ENCODE measurements at regions of chr17 and their contacts with region 1.

Region 1: DNA sequence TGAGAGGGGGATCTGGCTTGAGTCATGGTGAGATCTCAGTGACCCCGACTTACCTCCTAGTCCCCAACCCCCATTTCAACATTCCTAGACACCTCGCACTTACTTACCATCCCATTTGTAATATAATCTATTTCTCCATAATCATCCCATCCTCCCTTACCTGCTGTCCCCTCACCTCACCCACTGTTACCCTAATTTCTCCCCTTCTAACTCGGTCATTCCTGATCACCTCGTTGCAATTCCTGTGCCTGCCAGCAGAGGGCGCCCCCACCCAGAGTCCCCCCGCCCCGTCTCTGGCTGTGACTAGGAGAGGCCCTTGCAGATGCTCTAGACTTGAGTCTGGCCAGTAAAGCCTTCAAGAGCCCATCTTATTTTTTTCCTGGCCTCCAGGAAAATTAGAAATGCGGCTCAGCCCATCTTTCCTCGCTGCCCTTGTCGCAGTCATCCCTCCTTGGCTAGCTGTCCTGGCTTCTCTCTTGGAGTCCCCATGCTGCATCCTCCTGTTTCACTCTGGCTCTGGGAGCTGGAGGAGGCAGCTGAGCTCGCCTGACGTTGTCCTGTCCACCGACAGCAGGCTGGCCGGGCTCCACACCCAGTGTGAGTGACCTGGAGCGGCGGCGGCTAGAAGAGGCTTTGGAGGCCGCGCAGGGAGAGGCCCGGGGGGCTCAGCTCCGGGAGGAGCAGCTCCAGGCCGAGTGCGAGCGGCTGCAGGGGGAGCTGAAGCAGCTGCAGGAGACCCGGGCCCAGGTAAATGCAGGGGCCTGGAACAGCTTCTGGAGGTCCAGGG is 5.0 kb downstream of the TBKBP1 start:
- DNase-seq: peak; percentile 69 to 91 (median 81)
- ATAC-seq: peak; percentile 49
- H3K4me3 ChIP-seq: no peak overlapping the region
- H3K4me3 Mint-ChIP-seq: no peak overlapping the region
- H3K27ac ChIP-seq: peak overlapping the region in 1 of 2 experiments; percentile 4
- H3K27ac Mint-ChIP-seq: no peak overlapping the region
- H3K4me1 ChIP-seq: peaks cover 38% of the 10 kb centered on the region
- H3K4me1 Mint-ChIP-seq: peaks cover 43% of the 10 kb centered on the region
- H3K27me3 ChIP-seq: no peaks in the 10 kb centered on the region
- H3K27me3 Mint-ChIP-seq: no peaks in the 10 kb centered on the region
- CTCF ChIP-seq: peak; percentile 96

Region 2: GRCh38 chr17:47675380-47676198 is 23.4 kb before region 1 on chr17:
- CTCF ChIA-PET with region 1: interaction called, 13 read pairs
- POLR2A ChIA-PET with region 1: no interaction called
- intact Hi-C with region 1: no loop called
- DNase-seq: no peak
- ATAC-seq: no peak
- H3K4me3 ChIP-seq: no peak overlapping the region
- H3K4me3 Mint-ChIP-seq: no peak overlapping the region
- H3K27ac ChIP-seq: no peak overlapping the region
- H3K27ac Mint-ChIP-seq: no peak overlapping the region
- H3K4me1 ChIP-seq: no peaks in the 10 kb centered on the region
- H3K4me1 Mint-ChIP-seq: peaks cover 22% of the 10 kb centered on the region
- H3K27me3 ChIP-seq: no peaks in the 10 kb centered on the region
- H3K27me3 Mint-ChIP-seq: no peaks in the 10 kb centered on the region
- CTCF ChIP-seq: no peak

Region 3: DNA sequence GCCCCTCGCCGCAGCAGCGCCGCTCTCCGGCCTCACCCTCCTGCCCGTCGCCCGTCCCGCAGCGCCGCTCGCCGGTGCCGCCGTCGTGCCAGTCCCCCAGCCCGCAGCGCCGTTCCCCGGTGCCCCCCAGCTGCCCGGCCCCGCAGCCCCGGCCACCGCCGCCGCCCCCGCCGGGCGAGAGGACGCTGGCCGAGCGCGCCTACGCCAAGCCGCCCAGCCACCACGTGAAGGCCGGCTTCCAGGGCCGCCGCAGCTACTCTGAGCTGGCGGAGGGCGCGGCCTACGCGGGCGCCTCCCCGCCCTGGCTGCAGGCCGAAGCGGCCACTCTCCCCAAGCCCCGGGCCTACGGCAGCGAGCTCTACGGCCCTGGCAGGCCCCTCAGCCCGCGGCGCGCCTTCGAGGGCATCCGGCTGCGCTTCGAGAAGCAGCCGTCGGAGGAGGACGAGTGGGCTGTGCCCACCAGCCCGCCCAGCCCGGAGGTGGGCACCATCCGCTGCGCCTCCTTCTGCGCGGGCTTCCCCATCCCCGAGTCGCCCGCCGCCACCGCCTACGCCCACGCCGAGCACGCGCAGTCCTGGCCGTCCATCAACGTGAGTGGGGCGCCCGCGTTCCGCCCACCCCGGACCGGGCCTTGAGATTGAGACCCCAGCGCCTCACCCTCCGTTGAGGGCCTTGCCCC is 10.1 kb after region 1 on chr17:
- CTCF ChIA-PET with region 1: interaction called, 25 read pairs
- POLR2A ChIA-PET with region 1: no interaction called
- intact Hi-C with region 1: no loop called
- DNase-seq: no peak
- ATAC-seq: no peak
- H3K4me3 ChIP-seq: no peak overlapping the region
- H3K4me3 Mint-ChIP-seq: no peak overlapping the region
- H3K27ac ChIP-seq: no peak overlapping the region
- H3K27ac Mint-ChIP-seq: no peak overlapping the region
- H3K4me1 ChIP-seq: peaks cover 67% of the 10 kb centered on the region
- H3K4me1 Mint-ChIP-seq: peaks cover 56% of the 10 kb centered on the region
- H3K27me3 ChIP-seq: no peaks in the 10 kb centered on the region
- H3K27me3 Mint-ChIP-seq: no peaks in the 10 kb centered on the region
- CTCF ChIP-seq: no peak

Region 4: DNA sequence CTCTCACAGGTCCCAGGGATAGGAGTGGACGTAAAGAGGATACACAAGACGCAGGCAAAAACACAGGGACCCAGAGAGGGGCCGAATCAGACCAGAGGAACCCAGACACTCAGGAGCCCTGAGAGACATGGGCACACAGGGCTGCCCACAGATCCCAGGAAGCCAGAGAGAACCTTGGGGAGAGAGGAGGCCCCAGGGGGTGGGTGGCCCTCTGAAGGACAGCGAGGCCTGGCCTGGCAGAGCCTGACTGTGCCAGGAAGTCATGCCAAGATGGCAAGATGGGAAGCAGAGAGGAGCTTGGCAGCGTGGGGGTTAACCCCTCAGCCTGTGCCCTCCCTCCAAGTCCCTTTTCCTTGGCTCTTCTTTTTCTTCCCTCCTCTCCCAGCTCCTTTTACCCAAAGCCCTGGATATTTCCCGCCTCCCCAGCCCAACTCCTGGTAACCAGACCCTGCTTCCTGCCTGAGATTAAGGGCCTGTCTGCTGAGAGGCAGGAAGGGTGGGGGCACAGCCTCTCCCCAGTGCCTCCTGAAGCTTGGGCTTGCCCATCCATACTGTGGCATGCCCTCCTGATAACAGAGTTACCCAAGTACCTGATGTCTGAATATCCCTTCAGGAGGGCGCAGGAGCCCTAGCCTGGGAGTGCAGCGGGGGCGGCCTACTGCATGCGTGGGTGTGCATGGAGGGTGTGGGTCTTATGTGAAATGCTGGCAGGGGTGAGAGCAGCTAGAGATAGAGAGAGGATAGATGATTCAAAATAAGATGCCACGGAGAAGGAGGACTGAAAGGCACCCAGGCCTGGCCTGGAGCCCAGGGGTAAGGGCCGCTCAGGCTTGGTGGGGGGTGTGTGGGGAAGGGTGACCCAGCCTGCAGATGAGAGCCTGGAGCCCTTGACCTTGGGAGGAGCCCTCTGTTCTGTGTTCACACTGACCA is 28.1 kb after region 1 on chr17:
- CTCF ChIA-PET with region 1: interaction called, 37 read pairs
- POLR2A ChIA-PET with region 1: interaction called, 8 read pairs
- intact Hi-C with region 1: loop called (anchors 2 kb)
- DNase-seq: no peak
- ATAC-seq: no peak
- H3K4me3 ChIP-seq: no peak overlapping the region
- H3K4me3 Mint-ChIP-seq: no peak overlapping the region
- H3K27ac ChIP-seq: no peak overlapping the region
- H3K27ac Mint-ChIP-seq: no peak overlapping the region
- H3K4me1 ChIP-seq: peaks cover 20% of the 10 kb centered on the region
- H3K4me1 Mint-ChIP-seq: peaks cover 29% of the 10 kb centered on the region
- H3K27me3 ChIP-seq: no peaks in the 10 kb centered on the region
- H3K27me3 Mint-ChIP-seq: peaks cover 8% of the 10 kb centered on the region
- CTCF ChIP-seq: no peak

Region 5: GRCh38 chr17:47742319-47743181 is 43.6 kb after region 1 on chr17:
- CTCF ChIA-PET with region 1: interaction called, 94 read pairs
- POLR2A ChIA-PET with region 1: interaction called, 3 read pairs
- intact Hi-C with region 1: loop called (anchors 1 kb)
- DNase-seq: peak in 6 of 9 experiments; percentile 52 to 75 (median 62)
- ATAC-seq: peak; percentile 59
- H3K4me3 ChIP-seq: peak overlapping the region in 1 of 2 experiments; percentile 1
- H3K4me3 Mint-ChIP-seq: peak overlapping the region; percentile 11
- H3K27ac ChIP-seq: peak overlapping the region in 1 of 2 experiments; percentile 68
- H3K27ac Mint-ChIP-seq: peak overlapping the region; percentile 79
- H3K4me1 ChIP-seq: peaks cover 15% of the 10 kb centered on the region
- H3K4me1 Mint-ChIP-seq: peaks cover 26% of the 10 kb centered on the region
- H3K27me3 ChIP-seq: no peaks in the 10 kb centered on the region
- H3K27me3 Mint-ChIP-seq: no peaks in the 10 kb centered on the region
- CTCF ChIP-seq: peak; percentile 43

Region 6: GRCh38 chr17:47789611-47790561 is 90.9 kb after region 1 on chr17:
- CTCF ChIA-PET with region 1: interaction called, 4 read pairs
- POLR2A ChIA-PET with region 1: no interaction called
- intact Hi-C with region 1: loop called in 1 of 2 experiments (anchors 1 kb)
- DNase-seq: peak in 8 of 9 experiments; percentile 16 to 76 (median 47)
- ATAC-seq: peak; percentile 88
- H3K4me3 ChIP-seq: peak overlapping the region; percentile 35 to 40
- H3K4me3 Mint-ChIP-seq: peak overlapping the region; percentile 67
- H3K27ac ChIP-seq: no peak overlapping the region
- H3K27ac Mint-ChIP-seq: no peak overlapping the region
- H3K4me1 ChIP-seq: peaks cover 3% of the 10 kb centered on the region
- H3K4me1 Mint-ChIP-seq: peaks cover 12% of the 10 kb centered on the region
- H3K27me3 ChIP-seq: peaks cover 10 to 21% of the 10 kb centered on the region in 2 experiments
- H3K27me3 Mint-ChIP-seq: peaks cover 58% of the 10 kb centered on the region
- CTCF ChIP-seq: peak; percentile 57

Region 7: DNA sequence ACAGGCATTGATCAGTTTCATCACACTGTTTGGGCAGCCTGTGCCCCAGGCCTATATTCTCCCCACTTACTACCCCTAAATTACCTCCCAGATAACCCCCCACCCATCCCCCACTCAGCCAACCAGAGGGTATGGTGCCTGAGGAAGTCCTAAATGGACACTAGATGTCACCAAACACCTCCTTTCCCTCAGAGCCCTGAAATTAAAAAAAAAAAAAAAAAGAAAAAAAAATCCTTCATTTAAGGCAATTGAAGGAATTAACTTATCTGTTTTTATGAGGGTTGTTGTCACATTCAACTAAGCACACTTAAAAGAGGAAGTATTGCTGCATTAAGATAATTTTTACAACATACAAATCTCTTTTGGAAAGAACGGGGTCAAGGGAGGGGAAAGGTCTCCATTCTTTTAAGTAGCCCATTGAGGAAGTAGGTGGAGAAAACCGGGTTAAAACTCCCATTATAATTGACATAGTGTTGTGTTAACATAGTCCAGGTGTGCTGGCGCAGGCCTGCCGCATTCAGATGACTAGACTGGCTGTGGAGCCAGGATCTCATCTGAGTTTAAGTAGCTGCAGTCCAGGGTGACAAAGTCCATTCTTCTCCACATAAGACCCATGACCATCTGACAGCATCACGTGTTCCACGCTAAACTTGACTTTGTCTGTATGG is 454.9 kb after region 1 on chr17:
- CTCF ChIA-PET with region 1: no interaction called
- POLR2A ChIA-PET with region 1: no interaction called
- intact Hi-C with region 1: no loop called
- DNase-seq: peak in 2 of 9 experiments; percentile 15 to 36
- ATAC-seq: no peak
- H3K4me3 ChIP-seq: no peak overlapping the region
- H3K4me3 Mint-ChIP-seq: no peak overlapping the region
- H3K27ac ChIP-seq: no peak overlapping the region
- H3K27ac Mint-ChIP-seq: no peak overlapping the region
- H3K4me1 ChIP-seq: no peaks in the 10 kb centered on the region
- H3K4me1 Mint-ChIP-seq: peaks cover 2% of the 10 kb centered on the region
- H3K27me3 ChIP-seq: no peaks in the 10 kb centered on the region
- H3K27me3 Mint-ChIP-seq: no peaks in the 10 kb centered on the region
- CTCF ChIP-seq: no peak

Region 8: GRCh38 chr17:48228721-48229120 is 529.8 kb after region 1 on chr17:
- CTCF ChIA-PET with region 1: no interaction called
- POLR2A ChIA-PET with region 1: no interaction called
- intact Hi-C with region 1: no loop called
- DNase-seq: no peak
- ATAC-seq: no peak
- H3K4me3 ChIP-seq: no peak overlapping the region
- H3K4me3 Mint-ChIP-seq: no peak overlapping the region
- H3K27ac ChIP-seq: no peak overlapping the region
- H3K27ac Mint-ChIP-seq: no peak overlapping the region
- H3K4me1 ChIP-seq: peaks cover 6% of the 10 kb centered on the region
- H3K4me1 Mint-ChIP-seq: peaks cover 33% of the 10 kb centered on the region
- H3K27me3 ChIP-seq: no peaks in the 10 kb centered on the region
- H3K27me3 Mint-ChIP-seq: no peaks in the 10 kb centered on the region
- CTCF ChIP-seq: no peak

Region 9: GRCh38 chr17:48816774-48817590 is 1118.0 kb after region 1 on chr17 and contains the start of gene TTLL6:
- CTCF ChIA-PET with region 1: no interaction called
- POLR2A ChIA-PET with region 1: no interaction called
- intact Hi-C with region 1: no loop called
- DNase-seq: peak; percentile 47 to 89 (median 74)
- ATAC-seq: peak; percentile 99
- H3K4me3 ChIP-seq: peak within 1 kb of the TSS; percentile 39 to 66
- H3K4me3 Mint-ChIP-seq: peak within 1 kb of the TSS; percentile 81
- H3K27ac ChIP-seq: no peak within 1 kb of the TSS
- H3K27ac Mint-ChIP-seq: no peak within 1 kb of the TSS
- H3K4me1 ChIP-seq: peaks cover 11% of the 10 kb centered on the region
- H3K4me1 Mint-ChIP-seq: peaks cover 11% of the 10 kb centered on the region
- H3K27me3 ChIP-seq: peaks cover 17 to 20% of the 10 kb centered on the region in 2 experiments
- H3K27me3 Mint-ChIP-seq: peaks cover 40% of the 10 kb centered on the region
- CTCF ChIP-seq: no peak
- total RNA-seq, gene TTLL6: not detected

Measured in CD8-positive, alpha-beta T cell (primary cell).